MCF 10A (cell line): ENCODE measurements at regions of chrX and their contacts with region 1.

Region 1: GRCh38 chrX:120468825-120469525 is at the start of gene LAMP2:
- DNase-seq: peak; percentile 88
- H3K4me3 Mint-ChIP-seq: peak within 1 kb of the TSS; percentile 85
- H3K27ac Mint-ChIP-seq: peak within 1 kb of the TSS; percentile 83
- H3K4me1 Mint-ChIP-seq: peaks cover 23% of the 10 kb centered on the region
- H3K27me3 Mint-ChIP-seq: no peaks in the 10 kb centered on the region
- CTCF ChIP-seq: no peak
- total RNA-seq, gene LAMP2: 67.0 and 74.8 TPM in 2 replicates

Region 2: DNA sequence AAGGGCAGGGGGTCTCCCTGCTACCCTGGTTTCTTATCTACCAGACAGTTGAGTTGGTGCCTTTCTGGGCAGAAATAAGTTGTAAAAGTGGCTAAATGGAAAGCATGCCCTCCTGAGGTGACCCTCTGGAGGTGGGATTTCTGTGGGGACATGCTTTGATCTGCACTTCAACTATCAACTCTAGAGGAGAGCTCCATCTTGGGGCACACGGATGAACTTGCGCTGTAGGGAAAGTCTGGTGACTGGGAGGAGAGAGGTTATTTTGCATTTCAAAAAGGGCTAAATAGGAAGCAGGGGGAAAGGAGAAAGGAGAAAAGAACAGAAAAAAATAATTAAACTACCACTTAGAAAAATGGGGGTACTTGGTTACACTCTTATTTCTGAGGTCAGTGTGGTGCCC is 378.8 kb before region 1 on chrX:
- CTCF ChIA-PET with region 1: no interaction called
- POLR2A ChIA-PET with region 1: no interaction called
- intact Hi-C with region 1: no loop called
- DNase-seq: no peak
- H3K4me3 Mint-ChIP-seq: no peak overlapping the region
- H3K27ac Mint-ChIP-seq: no peak overlapping the region
- H3K4me1 Mint-ChIP-seq: peaks cover 8% of the 10 kb centered on the region
- H3K27me3 Mint-ChIP-seq: peaks cover 56% of the 10 kb centered on the region
- CTCF ChIP-seq: no peak

Region 3: GRCh38 chrX:120244735-120245498 is 224.1 kb before region 1 on chrX:
- CTCF ChIA-PET with region 1: no interaction called
- POLR2A ChIA-PET with region 1: interaction called, 3 read pairs
- intact Hi-C with region 1: loop called (anchors 10 kb)
- DNase-seq: peak; percentile 82
- H3K4me3 Mint-ChIP-seq: peak overlapping the region; percentile 87
- H3K27ac Mint-ChIP-seq: peak overlapping the region; percentile 92
- H3K4me1 Mint-ChIP-seq: peaks cover 6% of the 10 kb centered on the region
- H3K27me3 Mint-ChIP-seq: peaks cover 58% of the 10 kb centered on the region
- CTCF ChIP-seq: no peak

Region 4: GRCh38 chrX:120262859-120263708 is 205.9 kb before region 1 on chrX:
- CTCF ChIA-PET with region 1: interaction called, 3 read pairs
- POLR2A ChIA-PET with region 1: interaction called, 11 read pairs
- intact Hi-C with region 1: no loop called
- DNase-seq: no peak
- H3K4me3 Mint-ChIP-seq: no peak overlapping the region
- H3K27ac Mint-ChIP-seq: no peak overlapping the region
- H3K4me1 Mint-ChIP-seq: peaks cover 11% of the 10 kb centered on the region
- H3K27me3 Mint-ChIP-seq: peaks cover 14% of the 10 kb centered on the region
- CTCF ChIP-seq: no peak

Region 5: GRCh38 chrX:120457766-120458180 is 11.2 kb before region 1 on chrX:
- CTCF ChIA-PET with region 1: interaction called, 7 read pairs
- POLR2A ChIA-PET with region 1: interaction called, 66 read pairs
- intact Hi-C with region 1: no loop called
- DNase-seq: peak; percentile 91
- H3K4me3 Mint-ChIP-seq: no peak overlapping the region
- H3K27ac Mint-ChIP-seq: peak overlapping the region; percentile 90
- H3K4me1 Mint-ChIP-seq: peaks cover 27% of the 10 kb centered on the region
- H3K27me3 Mint-ChIP-seq: no peaks in the 10 kb centered on the region
- CTCF ChIP-seq: no peak

Region 6: DNA sequence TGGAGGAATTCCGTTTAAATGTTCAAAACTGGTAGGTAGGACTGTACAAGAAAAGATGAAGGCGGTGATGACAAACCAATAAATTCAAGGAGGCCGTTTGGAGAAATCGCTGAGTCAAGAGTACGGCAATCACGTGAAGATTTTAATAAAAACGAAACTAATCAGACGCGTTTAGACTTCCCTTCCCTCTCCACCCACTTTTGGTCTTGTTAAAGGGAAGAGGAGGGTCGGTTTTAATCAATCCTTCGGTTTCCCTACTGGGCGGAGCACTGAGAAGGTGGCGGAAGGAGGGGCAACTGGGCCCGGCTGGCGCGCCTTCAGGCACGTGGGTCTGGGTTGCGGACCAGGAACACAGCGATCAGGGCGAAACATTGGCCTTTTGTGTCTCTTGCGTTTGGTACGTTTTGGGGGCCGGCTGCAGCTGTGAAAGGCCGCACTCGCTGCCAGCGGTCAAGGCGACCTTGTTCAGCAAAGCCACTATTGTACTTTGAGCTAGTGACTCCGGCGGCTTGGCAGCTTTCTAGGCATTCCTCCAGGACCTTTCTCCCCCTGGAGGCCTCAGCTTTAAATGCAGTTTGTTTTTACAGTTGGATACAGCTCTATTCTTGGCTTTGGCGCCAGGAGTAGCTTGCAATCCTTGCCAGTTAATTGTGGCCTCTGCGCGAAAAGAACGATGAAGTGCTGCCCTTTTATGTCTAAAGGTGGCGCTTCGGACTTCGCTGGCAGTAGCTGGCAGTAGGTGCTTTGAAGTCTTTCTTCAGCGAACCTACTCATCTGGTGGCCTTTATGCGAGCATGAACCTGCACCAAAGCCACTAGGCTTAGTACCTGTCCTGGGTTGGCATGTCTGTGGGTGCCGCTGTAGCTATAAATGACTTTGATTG is 16.9 kb after region 1 on chrX:
- CTCF ChIA-PET with region 1: interaction called, 5 read pairs
- POLR2A ChIA-PET with region 1: interaction called, 15 read pairs
- intact Hi-C with region 1: no loop called
- DNase-seq: peak; percentile 88
- H3K4me3 Mint-ChIP-seq: peak overlapping the region; percentile 75
- H3K27ac Mint-ChIP-seq: peak overlapping the region; percentile 94
- H3K4me1 Mint-ChIP-seq: no peaks in the 10 kb centered on the region
- H3K27me3 Mint-ChIP-seq: no peaks in the 10 kb centered on the region
- CTCF ChIP-seq: peak; percentile 43

Region 7: GRCh38 chrX:120769576-120770341 is 300.8 kb after region 1 on chrX:
- CTCF ChIA-PET with region 1: no interaction called
- POLR2A ChIA-PET with region 1: no interaction called
- intact Hi-C with region 1: no loop called
- DNase-seq: peak; percentile 85
- H3K4me3 Mint-ChIP-seq: no peak overlapping the region
- H3K27ac Mint-ChIP-seq: peak overlapping the region; percentile 15
- H3K4me1 Mint-ChIP-seq: peaks cover 7% of the 10 kb centered on the region
- H3K27me3 Mint-ChIP-seq: no peaks in the 10 kb centered on the region
- CTCF ChIP-seq: peak; percentile 32